Activated CD4-positive, alpha-beta memory T cell treated with anti-CD3 and anti-CD28 coated beads for 36 hours (primary cell): ENCODE measurements at regions of chr5 and their contacts with region 1.

Region 1: DNA sequence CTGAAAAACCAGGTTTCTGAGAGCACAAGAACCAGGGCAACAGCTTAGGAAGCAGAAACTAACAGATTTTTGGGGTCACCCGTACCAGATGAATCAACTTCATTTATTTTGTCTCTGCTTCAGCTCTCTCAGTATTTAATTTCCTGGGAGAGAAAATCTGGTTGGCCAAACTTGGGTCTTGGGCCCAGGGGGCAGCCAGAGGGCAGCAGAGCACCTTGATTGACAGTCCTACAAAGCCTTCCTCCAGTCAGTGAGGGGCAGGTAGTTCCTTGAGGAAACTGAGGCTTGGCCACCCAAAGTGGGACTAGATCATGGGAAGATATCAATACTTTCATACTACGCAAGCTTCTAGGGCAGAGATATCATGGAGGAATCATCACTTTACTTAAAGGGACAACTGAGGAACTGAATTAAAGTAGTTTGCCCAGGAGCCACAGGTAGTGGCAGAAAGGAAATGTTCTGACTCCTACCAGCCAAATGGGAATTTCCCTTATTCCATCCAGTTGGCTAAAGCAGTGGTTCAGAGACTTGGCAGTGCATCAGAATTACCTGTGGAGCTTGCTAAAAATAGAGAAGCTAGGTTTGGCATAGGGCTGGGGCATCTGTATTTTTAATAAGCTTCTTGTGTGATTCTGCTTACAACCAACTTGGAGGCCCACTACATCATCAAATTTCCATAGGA is 21.5 kb upstream of the ARHGAP26 start:
- DNase-seq: peak; percentile 72
- H3K4me3 Mint-ChIP-seq: no peak overlapping the region
- H3K27ac Mint-ChIP-seq: peak overlapping the region; percentile 57
- H3K4me1 Mint-ChIP-seq: peaks cover 12% of the 10 kb centered on the region
- H3K27me3 Mint-ChIP-seq: peaks cover 2% of the 10 kb centered on the region

Region 2: DNA sequence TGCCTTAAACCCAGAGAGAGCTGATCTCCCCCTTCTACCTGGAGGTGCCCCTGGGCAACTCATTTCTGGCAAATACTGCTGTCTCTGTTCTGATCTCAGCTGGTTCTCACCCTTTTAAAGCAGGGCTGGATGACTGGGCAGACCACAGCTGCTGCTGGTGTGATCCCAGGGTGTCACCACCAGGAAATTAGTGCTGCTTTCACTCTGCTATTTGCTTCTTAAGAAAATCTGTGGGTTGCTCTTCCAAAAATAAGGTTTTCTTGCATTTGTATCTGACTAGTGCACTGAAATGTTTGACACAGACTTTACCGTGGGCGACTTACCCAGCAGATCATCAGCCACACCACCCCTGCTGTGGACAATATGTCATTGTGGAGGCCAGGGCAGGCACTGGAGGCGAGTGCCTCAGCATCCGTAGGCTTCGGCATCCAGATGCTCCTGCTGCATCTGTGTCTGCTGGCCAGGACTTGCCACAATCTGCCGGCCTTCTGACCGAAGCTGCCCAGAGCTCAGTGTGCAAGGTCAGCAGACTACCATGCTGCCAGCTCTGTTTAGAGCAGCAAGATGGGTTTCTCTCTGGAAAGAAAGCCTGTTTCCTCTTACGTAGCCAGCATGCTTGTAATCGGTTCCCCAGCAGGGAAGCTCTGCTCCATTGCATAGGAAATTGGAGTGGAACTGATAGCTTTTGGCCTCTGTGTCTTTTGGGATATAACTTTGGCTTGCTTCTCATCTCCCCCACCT is 35.1 kb after region 1 on chr5:
- CTCF ChIA-PET with region 1: interaction called, 13 read pairs
- POLR2A ChIA-PET with region 1: no interaction called
- intact Hi-C with region 1: no loop called
- DNase-seq: peak; percentile 90
- H3K4me3 Mint-ChIP-seq: peak overlapping the region; percentile 34
- H3K27ac Mint-ChIP-seq: peak overlapping the region; percentile 85
- H3K4me1 Mint-ChIP-seq: peaks cover 56% of the 10 kb centered on the region
- H3K27me3 Mint-ChIP-seq: no peaks in the 10 kb centered on the region

Region 3: DNA sequence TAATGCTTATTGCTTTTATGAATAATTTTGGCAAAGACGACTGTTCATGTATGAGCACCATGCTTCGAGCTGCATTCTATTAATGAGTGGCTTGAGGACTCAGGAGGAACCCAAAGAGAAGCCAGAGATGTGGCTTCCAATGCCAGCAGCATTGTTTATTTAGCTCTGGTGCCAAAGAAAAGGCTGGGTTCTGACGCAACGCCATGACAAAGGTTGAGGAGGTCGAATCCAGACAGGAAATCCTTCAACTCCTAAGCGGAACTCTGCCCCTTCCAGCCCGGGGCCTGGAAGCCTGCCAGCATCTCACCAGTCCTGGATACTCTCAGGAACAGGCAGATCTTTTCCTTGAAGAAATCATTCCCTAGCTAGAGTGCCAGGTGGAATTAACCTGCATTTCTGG is 125.8 kb after region 1 on chr5:
- CTCF ChIA-PET with region 1: interaction called, 251 read pairs
- POLR2A ChIA-PET with region 1: no interaction called
- intact Hi-C with region 1: no loop called
- DNase-seq: no peak
- H3K4me3 Mint-ChIP-seq: no peak overlapping the region
- H3K27ac Mint-ChIP-seq: no peak overlapping the region
- H3K4me1 Mint-ChIP-seq: no peaks in the 10 kb centered on the region
- H3K27me3 Mint-ChIP-seq: no peaks in the 10 kb centered on the region

Region 4: DNA sequence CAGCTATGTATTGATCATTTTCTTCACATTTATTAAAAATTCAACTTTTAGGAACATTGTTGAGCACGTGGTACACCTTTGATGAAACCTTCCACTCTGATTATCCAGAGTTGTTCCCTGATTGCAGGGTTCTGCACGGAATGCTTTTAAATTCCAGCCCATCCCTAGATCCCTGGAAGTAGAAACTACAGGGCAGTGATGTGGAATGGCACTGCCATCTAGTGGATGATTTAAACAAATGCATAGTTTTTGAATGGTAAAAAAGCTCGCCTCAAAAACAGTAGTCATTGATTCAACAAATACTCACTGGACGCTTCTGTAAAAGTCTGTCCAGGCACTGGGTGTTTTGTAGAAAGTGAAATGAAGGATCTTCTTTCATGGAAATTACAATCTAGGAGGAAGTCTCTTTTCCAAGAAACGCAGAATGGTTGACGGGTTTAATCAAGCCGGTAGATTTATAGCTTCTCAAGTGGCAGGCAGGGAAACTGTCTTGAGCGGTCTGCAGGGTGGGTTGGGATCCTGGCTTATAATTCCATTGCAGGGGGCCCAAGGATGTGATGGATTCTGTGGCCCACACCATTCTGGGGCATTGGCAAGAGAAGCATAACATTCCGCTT is 139.9 kb after region 1 on chr5:
- CTCF ChIA-PET with region 1: interaction called, 251 read pairs
- POLR2A ChIA-PET with region 1: no interaction called
- intact Hi-C with region 1: loop called (anchors 2 kb)
- DNase-seq: no peak
- H3K4me3 Mint-ChIP-seq: no peak overlapping the region
- H3K27ac Mint-ChIP-seq: no peak overlapping the region
- H3K4me1 Mint-ChIP-seq: no peaks in the 10 kb centered on the region
- H3K27me3 Mint-ChIP-seq: no peaks in the 10 kb centered on the region